AG04449 (cell line): ENCODE measurements at regions of chr1 and their contacts with region 1.

Region 1: GRCh38 chr1:29124366-29125236 is 898 bp upstream of the TMEM200B start:
- DNase-seq: no peak
- H3K4me3 ChIP-seq: peak overlapping the region; percentile 73
- CTCF ChIP-seq: peak; percentile 91

Region 2: GRCh38 chr1:28642847-28643635 is 481.6 kb before region 1 on chr1 and contains the start of gene TAF12:
- CTCF ChIA-PET with region 1: no interaction called
- POLR2A ChIA-PET with region 1: no interaction called
- DNase-seq: peak; percentile 60
- H3K4me3 ChIP-seq: peak within 1 kb of the TSS; percentile 97
- CTCF ChIP-seq: peak; percentile 39

Region 3: DNA sequence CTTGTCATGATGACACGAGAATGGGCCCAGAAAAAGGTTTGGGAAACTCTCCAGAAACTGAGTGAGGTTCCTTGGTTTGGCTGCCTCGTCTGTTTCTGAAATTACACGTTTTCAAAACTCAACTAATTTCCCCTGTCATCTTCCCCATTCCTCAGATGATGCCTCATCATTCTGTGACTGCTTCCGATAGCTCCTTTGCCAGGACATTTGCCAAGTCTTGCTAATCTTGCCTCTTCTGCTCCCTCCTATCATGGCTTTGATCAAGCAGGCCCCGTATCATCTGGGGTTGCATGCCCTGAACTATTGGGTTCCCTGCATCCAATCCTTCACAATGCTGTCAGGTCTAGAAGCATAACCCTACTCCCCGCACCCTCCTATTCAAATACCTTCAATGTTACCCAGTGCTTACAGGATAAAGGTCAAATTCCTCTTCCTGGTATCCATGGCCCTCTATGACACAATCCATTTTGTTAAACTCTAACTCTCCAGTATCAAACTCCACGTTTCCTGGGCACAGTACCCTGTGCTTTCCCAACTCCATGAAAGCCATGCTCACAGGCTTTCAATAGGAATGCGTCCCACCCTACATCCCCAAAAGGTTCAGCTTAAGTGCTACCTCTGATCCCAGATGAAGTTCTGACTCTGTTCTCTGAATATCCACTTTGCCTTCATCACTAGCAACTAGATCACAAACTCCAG is 21.3 kb after region 1 on chr1:
- CTCF ChIA-PET with region 1: interaction called, 18 read pairs
- POLR2A ChIA-PET with region 1: interaction called, 6 read pairs
- DNase-seq: peak; percentile 59
- H3K4me3 ChIP-seq: no peak overlapping the region
- CTCF ChIP-seq: no peak

Region 4: DNA sequence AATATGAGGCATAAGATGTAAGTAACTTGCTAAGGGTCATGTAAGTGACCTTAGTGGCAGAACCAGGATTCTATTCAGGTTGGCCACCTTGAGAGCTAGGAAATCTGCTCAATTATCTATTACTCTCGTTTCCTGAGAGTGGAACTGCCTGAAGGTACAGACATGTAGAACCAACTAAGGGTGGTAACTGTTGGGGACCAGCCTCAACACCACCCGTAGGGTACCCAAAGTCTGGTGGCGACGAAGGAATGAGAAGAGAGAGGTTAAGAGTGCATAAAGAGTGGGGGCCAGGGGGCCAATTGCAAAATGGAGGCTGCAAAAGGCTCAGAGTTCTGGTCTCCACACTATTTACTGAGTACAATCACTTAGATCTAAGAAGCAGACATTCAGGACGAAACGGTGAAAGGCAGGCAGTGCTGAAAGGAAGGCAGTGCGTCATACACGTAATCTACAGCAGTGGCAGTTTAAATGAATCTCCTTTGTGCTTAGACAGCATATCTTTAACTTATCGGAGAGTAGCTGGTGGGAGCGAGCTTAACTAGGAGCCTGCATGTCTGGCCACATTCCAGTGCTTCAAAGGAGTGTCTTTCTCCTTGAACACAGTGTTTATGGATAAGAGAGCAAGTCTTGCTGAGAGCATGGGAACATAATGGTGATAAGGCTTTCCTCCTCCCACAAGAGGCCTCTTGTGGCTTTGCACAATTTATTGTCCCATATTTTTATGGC is 32.1 kb after region 1 on chr1:
- CTCF ChIA-PET with region 1: interaction called, 10 read pairs
- POLR2A ChIA-PET with region 1: no interaction called
- DNase-seq: no peak
- H3K4me3 ChIP-seq: no peak overlapping the region
- CTCF ChIP-seq: no peak